Spleen (tissue), 13 donors: ENCODE measurements at regions of chr17 and their contacts with region 1.

Region 1: DNA sequence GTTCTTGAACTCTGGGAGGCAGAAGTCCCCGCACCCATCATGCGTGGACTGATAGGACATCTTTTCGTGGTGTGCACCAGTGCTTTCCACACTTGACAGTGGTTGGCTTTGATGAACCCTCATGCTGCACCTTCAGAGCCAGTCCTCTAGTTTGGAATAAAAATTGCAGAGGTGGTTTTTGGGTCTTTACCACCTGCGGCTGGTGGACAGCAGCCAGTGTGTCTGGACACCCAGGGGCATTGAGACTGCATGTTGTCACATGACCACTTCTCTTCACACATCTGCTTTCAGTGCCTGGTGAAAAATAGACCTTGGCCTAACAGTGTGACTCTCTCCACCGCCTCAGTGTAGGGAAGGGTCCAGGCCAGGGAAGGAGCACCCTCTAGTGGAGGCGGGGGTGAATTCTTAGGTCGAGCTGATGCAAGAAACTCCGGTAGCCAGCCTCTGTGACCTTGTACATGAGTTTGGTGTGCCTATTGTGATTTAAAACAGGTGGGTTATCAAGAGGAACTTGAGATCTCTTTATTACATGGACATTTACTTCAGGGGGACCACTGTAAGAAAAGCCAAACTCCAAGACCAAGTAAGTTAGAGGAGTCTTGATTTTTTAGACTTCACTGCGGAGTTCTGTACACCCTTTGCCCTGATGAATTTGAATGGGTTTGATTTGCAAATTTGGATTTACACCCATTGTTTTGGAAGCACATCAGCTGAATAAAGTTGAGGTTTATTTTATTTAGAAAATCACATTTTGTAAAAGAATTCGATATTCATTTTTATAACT is 17.9 kb downstream of the GOSR2 start:
- DNase-seq: peak; percentile 85
- H3K4me3 ChIP-seq: no peak overlapping the region
- H3K27ac ChIP-seq: peak overlapping the region in 1 of 8 donors; percentile 21
- H3K4me1 ChIP-seq: peaks cover 12 to 43% (median 34%) of the 10 kb centered on the region in 6 donors
- H3K27me3 ChIP-seq: no peaks in the 10 kb centered on the region
- CTCF ChIP-seq: peak; percentile 31 to 83 (median 78)
- POLR2A ChIP-seq: no peak

Region 2: GRCh38 chr17:46758623-46759022 is 182.2 kb before region 1 on chr17:
- intact Hi-C with region 1: no loop called
- DNase-seq: no peak
- H3K4me3 ChIP-seq: no peak overlapping the region
- H3K27ac ChIP-seq: no peak overlapping the region
- H3K4me1 ChIP-seq: no peaks in the 10 kb centered on the region
- H3K27me3 ChIP-seq: no peaks in the 10 kb centered on the region
- CTCF ChIP-seq: no peak
- POLR2A ChIP-seq: no peak

Region 3: DNA sequence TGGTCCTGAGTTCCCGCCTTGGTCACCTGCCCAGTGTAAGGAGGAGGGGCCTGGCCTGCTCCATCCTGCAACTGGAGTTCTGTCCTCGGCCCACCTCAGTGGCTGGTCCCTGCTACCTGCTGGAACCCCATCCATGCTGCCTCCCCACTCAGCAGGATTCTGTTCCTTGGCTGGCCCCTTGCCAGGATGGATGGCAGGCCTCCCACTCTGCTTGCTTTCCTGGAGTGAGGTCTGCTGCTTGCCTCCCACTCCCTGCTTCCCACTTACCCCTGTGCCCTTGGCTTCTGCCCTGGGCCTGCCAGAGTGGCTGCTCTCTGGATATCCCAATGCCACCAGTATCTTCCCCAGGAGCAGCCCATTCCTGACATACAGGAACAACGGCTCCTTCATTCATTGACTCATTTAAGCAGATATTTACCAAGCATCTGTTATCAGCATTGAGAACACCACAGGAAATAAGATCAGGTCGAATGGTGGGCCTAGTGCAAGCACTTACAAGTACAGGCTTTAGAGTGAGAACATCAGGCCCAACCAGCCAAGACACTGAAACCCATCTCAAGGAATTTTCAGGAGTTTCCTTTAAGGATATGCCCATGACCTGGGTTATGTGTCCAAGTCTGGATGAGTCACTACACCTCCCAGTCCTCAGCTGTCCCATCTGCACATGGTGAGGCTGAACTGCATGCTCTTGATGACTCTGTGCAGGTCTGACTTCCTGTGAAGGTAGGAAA is 55.2 kb after region 1 on chr17:
- intact Hi-C with region 1: loop called (anchors 10 kb)
- DNase-seq: no peak
- H3K4me3 ChIP-seq: no peak overlapping the region
- H3K27ac ChIP-seq: no peak overlapping the region
- H3K4me1 ChIP-seq: peaks cover 0 to 12% (median 0%) of the 10 kb centered on the region in 6 donors
- H3K27me3 ChIP-seq: no peaks in the 10 kb centered on the region
- CTCF ChIP-seq: no peak
- POLR2A ChIP-seq: no peak